Esophagus muscularis mucosa (tissue), 4 donors: ENCODE measurements at regions of chr5 and their contacts with region 1.

Region 1: DNA sequence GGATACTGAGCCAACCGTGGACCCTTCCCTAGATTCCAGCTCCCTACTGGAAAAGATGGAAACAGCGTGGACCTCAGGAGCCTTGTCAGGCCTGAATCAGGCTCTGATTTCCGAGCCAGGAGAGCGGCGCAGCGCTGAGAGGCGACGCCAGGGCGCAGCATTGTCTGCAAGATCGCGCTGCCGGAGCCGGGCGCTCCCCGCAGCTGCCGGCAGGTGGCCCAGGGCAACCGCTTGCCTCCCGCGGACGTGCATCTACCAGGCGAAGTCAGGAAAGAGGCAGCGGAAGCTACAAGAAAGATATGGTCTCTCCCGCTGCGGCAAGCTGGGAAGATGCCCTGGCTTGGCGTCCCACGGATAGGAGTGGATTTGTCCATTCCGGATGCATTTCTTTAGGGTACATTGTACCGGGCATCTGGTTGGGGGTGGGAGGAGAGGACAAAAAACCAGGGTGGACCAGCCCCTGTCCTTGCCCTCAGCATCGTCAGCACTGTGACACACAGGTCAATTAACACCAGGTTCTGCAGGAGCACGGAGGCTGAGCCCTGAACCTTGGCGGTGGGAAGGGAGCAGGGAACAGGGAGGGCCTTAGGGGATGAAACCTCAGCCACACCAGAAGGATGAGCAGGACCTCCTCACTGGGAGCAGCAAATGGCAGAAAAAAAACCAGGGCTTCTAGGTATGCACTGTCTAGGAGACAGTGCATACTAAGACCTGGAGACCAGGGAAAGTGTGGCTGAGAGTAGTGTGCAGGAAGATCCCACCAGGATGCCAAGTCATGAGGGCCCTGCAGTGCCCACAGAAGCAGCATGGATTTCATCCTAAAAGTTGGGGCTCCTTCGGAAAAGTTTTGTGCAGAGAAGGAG is 55.9 kb downstream of the SFXN1 start:
- DNase-seq: peak; percentile 93
- H3K4me3 ChIP-seq: peak overlapping the region in 1 of 4 donors; percentile 9
- H3K27ac ChIP-seq: no peak overlapping the region
- H3K4me1 ChIP-seq: peaks cover 5 to 9% (median 7%) of the 10 kb centered on the region in 4 donors
- H3K27me3 ChIP-seq: peaks cover 0 to 34% (median 0%) of the 10 kb centered on the region in 4 donors
- CTCF ChIP-seq: peak; percentile 65 to 87 (median 74)
- EP300 ChIP-seq: no peak
- POLR2A ChIP-seq: no peak

Region 2: DNA sequence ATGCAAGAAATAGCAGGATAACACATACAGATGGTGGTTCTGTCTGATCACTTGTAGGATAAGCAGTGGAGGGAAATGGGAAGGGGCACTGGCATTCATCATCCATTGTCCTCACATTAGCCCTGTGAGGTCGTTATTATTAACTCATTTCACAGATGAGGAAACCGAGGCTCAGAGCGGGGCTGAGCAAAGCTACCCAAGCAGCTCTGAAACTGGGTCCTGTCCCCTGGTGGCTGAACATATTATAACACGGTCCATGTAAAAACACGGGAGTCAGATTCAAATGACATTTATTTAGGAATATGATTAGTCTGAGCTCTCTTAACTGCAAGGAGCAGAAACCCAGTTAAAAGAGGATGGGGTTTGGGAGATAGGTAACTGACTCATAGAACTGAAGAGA is 166.7 kb after region 1 on chr5:
- intact Hi-C with region 1: loop called (anchors 10 kb)
- DNase-seq: no peak
- H3K4me3 ChIP-seq: no peak overlapping the region
- H3K27ac ChIP-seq: no peak overlapping the region
- H3K4me1 ChIP-seq: no peaks in the 10 kb centered on the region
- H3K27me3 ChIP-seq: peaks cover 0 to 26% (median 0%) of the 10 kb centered on the region in 4 donors
- CTCF ChIP-seq: peak in 2 of 3 experiments; percentile 21 to 36
- EP300 ChIP-seq: no peak
- POLR2A ChIP-seq: no peak